Left ventricle myocardium superior (tissue), 1 donor: ENCODE measurements at regions of chr6 and their contacts with region 1.

Region 1: GRCh38 chr6:139965393-139965792 is 590.9 kb upstream of the CITED2 start:
- DNase-seq: no peak
- ATAC-seq: peak; percentile 61

Region 2: DNA sequence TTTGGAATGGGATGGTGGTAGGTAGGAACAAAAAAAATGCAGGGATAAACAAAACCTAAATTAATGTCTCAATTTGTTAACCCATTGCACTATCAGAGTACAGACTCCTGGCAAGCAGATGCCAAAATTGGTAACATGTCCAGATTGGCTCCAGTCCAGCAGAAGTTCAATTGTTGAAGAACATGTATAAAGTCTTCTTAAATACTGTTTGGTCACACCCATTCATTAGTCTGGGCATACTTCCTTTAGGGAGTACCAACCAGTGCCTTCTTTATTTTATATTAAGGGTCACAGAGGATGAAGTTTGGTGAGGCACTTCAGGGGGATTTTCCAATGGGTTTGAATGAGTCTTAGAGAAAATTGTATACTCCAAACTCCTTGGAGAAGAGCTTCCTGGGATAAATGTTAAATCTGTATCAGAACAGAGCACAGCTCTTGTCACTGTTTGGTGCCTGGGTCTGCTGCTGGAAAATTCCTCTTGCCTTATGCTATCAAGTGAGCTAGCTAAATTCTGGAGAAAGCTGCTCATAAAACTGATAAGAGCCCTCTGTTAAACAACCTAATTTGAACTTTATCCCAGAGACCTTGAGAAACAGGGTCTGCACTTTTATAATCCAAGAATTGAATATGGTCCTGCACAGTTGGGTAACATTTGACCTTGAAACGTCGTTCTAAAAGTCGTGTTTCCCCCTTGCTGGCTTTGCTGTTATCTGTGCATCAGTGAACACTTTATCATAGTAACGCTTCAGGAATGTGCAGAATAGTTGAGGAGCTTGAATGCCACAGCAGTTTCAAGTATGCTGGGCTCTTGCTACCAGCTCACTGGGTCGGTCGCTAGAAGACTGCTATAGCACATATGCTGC is 256.8 kb before region 1 on chr6:
- intact Hi-C with region 1: no loop called
- DNase-seq: no peak
- ATAC-seq: peak; percentile 43

Region 3: GRCh38 chr6:139881728-139882211 is 83.6 kb before region 1 on chr6:
- intact Hi-C with region 1: loop called (anchors 10 kb)
- DNase-seq: peak; percentile 32
- ATAC-seq: peak; percentile 77

Region 4: DNA sequence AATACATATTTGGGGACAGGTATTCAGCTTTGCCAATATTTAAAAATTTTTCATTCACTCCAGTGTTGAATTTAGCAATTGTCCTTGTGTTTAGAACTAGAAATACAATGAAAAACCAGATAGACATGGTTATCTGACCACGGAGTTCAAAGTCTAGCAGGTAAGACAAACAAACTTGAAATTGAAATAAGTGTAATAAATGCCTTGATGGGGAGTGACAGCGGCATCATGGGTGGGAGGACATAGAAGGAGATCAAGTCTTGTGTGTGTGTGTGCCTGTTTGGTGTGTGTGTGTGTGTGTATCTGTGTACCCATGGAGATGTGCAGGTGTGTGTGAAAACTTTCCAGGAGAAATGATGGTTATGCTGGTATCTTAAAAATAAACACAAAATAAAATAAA is 159.1 kb after region 1 on chr6:
- intact Hi-C with region 1: no loop called
- DNase-seq: no peak
- ATAC-seq: no peak